PC-9 (cell line): ENCODE measurements at regions of chr5 and their contacts with region 1.

Region 1: DNA sequence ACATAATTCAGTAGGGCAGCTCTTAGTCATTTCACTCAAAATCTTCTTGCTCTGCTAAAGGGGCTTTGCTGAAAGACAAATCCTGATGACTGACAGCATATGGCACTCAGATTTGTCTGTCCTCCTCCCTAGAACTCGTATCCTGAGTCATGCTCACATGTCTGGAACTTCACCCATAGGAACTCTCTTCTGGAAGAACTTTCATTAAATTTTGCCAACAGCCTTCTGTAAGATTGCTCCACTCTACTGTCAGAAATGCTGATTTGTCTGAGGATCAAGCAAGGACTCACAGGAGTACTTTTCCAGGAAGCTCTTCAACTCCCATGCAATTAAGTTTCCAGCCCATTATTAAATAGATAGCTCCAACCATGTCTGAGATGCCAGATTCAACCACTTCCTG is 59.8 kb upstream of the SNX2 start:
- DNase-seq: no peak
- H3K4me3 ChIP-seq: no peak overlapping the region
- H3K27ac ChIP-seq: no peak overlapping the region
- H3K4me1 ChIP-seq: no peaks in the 10 kb centered on the region
- H3K27me3 ChIP-seq: no peaks in the 10 kb centered on the region
- CTCF ChIP-seq: no peak

Region 2: GRCh38 chr5:122743261-122743660 is 28.2 kb after region 1 on chr5:
- CTCF ChIA-PET with region 1: interaction called, 14 read pairs
- POLR2A ChIA-PET with region 1: no interaction called
- intact Hi-C with region 1: no loop called
- DNase-seq: no peak
- H3K4me3 ChIP-seq: no peak overlapping the region
- H3K27ac ChIP-seq: no peak overlapping the region
- H3K4me1 ChIP-seq: no peaks in the 10 kb centered on the region
- H3K27me3 ChIP-seq: no peaks in the 10 kb centered on the region
- CTCF ChIP-seq: no peak

Region 3: DNA sequence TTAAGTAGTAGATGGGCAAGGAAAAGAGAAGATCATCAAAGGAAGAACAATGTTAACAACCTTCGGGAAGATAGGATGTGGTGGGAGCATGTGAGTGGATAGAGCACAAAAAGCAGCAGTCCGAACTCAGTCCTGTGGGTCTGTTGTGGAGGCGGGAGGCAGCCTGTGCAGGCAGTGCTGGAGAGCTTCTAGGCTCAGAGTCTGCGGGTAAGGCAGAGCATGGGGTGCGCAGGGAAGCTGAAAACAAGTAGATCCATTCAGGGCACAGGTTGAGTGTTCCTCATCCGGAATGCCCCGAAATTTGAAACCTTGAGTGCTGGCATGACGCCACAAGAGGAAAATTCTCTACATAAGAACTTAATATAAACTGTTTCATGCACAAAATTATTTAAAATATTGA is 236.6 kb after region 1 on chr5:
- CTCF ChIA-PET with region 1: no interaction called
- POLR2A ChIA-PET with region 1: no interaction called
- intact Hi-C with region 1: no loop called
- DNase-seq: no peak
- H3K4me3 ChIP-seq: no peak overlapping the region
- H3K27ac ChIP-seq: no peak overlapping the region
- H3K4me1 ChIP-seq: no peaks in the 10 kb centered on the region
- H3K27me3 ChIP-seq: no peaks in the 10 kb centered on the region
- CTCF ChIP-seq: no peak

Region 4: GRCh38 chr5:122967625-122968024 is 252.5 kb after region 1 on chr5:
- CTCF ChIA-PET with region 1: no interaction called
- POLR2A ChIA-PET with region 1: no interaction called
- intact Hi-C with region 1: no loop called
- DNase-seq: no peak
- H3K4me3 ChIP-seq: no peak overlapping the region
- H3K27ac ChIP-seq: no peak overlapping the region
- H3K4me1 ChIP-seq: no peaks in the 10 kb centered on the region
- H3K27me3 ChIP-seq: no peaks in the 10 kb centered on the region
- CTCF ChIP-seq: no peak

Region 5: GRCh38 chr5:123387313-123387712 is 672.2 kb after region 1 on chr5:
- CTCF ChIA-PET with region 1: no interaction called
- POLR2A ChIA-PET with region 1: no interaction called
- intact Hi-C with region 1: no loop called
- DNase-seq: no peak
- H3K4me3 ChIP-seq: no peak overlapping the region
- H3K27ac ChIP-seq: no peak overlapping the region
- H3K4me1 ChIP-seq: no peaks in the 10 kb centered on the region
- H3K27me3 ChIP-seq: no peaks in the 10 kb centered on the region
- CTCF ChIP-seq: no peak